Activated CD4-positive, alpha-beta T cell treated with anti-CD3 and anti-CD28 coated beads for 36 hours (primary cell): ENCODE measurements at regions of chr14 and their contacts with region 1.

Region 1: DNA sequence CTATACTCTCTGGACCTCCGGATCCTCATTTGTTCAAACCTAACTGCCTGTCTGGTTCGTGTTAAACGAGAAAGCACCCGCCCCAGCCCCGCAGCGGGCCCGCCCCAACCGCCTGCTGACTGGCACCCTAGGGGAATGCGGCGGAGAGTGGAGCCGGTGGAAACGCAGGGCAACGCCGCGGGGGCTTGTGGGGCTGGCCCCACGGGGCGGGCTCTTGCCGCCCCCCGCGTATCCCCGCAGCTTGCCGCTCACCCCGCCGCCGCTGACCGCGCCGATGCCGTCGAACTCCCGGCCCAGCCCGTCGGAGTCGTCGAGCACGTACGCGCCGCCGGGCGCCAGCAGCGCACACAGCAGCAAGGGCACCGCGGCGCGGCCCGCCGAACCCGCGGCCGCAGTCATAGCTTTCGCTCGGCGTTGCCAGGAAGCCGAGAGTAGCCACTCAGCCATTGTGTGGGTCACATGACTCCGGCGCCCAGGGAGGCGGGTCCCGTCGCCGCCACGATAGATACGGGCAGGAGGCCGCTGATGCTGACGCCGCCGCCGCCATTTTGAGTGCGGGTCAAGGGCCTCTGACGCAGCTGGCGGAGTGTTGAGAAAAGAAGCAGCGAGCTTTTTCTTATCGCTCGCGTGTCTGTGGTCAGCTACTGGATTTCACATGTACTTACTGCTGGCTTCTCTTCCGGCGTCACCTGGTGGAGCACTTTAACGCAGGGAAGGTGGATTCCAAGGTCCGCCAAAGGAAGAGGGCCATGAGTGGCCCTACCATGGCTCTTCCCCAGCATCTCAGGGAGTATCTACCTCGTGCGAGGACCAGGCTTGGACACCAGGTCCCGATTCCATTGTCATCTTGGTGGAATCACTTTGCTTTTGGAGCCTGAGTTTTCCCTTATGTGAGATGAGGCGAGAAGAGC is at the start of gene GALC:
- DNase-seq: peak; percentile 97
- ATAC-seq: peak; percentile 90
- H3K4me3 Mint-ChIP-seq: peak within 1 kb of the TSS; percentile 81
- H3K27ac Mint-ChIP-seq: peak within 1 kb of the TSS; percentile 95
- H3K4me1 Mint-ChIP-seq: peaks cover 56% of the 10 kb centered on the region
- H3K27me3 Mint-ChIP-seq: no peaks in the 10 kb centered on the region
- total RNA-seq, gene GALC: 10.3 to 10.8 TPM

Region 2: DNA sequence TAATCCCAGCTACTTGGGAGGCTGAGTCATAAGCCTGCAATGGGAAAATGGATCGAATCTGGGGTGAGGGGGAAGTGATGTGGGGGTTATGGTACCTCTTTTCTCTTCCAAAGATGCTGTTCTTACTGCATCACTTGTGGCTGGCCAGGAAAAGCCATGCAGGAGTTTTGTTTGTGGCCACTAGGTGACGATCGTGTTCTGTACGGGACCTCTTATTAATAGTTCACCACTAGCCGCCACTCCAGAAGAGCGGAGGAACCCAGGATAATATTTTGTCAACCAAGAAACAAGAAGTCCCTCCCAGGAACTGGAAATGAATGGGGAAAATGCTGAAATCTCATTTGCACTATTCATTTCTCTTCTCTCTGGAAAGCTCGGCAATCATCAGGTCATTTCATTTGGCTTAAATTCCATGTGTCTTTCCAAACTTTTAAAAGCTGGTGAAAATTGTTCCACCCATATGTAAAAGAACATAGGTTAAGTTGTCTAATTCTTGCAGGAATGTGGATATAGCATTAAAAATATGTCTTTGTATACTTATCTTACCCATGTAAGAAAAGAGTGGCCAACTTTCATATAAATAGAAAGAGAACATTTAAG is 20.9 kb after region 1 on chr14:
- CTCF ChIA-PET with region 1: interaction called, 26 read pairs
- POLR2A ChIA-PET with region 1: no interaction called
- intact Hi-C with region 1: no loop called
- DNase-seq: peak; percentile 50
- ATAC-seq: peak; percentile 58
- H3K4me3 Mint-ChIP-seq: no peak overlapping the region
- H3K27ac Mint-ChIP-seq: no peak overlapping the region
- H3K4me1 Mint-ChIP-seq: peaks cover 63% of the 10 kb centered on the region
- H3K27me3 Mint-ChIP-seq: no peaks in the 10 kb centered on the region

Region 3: GRCh38 chr14:88030079-88030478 is 37.1 kb after region 1 on chr14:
- CTCF ChIA-PET with region 1: interaction called, 4 read pairs
- POLR2A ChIA-PET with region 1: interaction called, 3 read pairs
- intact Hi-C with region 1: loop called in 1 of 2 experiments (anchors 2 kb)
- DNase-seq: no peak
- ATAC-seq: no peak
- H3K4me3 Mint-ChIP-seq: no peak overlapping the region
- H3K27ac Mint-ChIP-seq: peak overlapping the region; percentile 32
- H3K4me1 Mint-ChIP-seq: peaks cover 50% of the 10 kb centered on the region
- H3K27me3 Mint-ChIP-seq: no peaks in the 10 kb centered on the region

Region 4: DNA sequence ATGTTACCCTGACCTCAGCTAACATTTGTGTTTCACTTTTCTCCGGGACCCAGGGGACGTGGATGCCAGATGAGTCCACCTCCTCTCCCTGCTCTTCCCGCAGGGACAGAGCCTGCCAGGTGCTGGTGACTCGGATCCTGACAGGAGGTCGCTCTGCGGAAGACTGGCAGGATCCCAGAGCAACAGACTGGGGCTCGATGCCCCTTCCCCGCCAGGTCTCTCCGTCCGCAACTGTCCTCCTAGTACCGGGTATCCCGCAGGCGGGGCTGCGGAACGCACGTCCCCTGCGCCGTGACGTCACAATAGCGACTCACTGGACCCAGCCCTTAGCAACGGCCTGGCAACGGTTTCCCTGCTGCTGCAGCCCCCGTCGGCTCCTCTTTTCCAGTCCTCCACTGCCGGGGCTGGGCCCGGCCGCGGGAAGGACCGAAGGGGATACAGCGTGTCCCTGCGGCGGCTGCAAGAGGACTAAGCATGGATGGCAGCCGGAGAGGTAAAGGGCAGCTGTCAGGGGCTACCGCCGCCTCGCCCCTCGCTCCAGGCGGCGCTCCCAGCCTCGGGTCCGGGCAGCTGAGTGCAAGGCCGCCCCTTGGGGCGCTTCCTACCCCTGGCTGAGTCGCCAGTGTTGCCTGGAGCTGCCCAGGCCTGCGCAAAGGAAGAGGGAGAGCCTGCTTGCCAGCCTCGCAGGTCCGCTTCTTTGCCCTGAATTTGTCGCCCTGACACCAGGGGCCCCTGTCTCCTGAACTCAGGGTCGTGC is 392.6 kb after region 1 on chr14 and contains the start of gene SPATA7:
- CTCF ChIA-PET with region 1: no interaction called
- POLR2A ChIA-PET with region 1: no interaction called
- intact Hi-C with region 1: loop called in 1 of 2 experiments (anchors 10 kb)
- DNase-seq: peak; percentile 93
- ATAC-seq: peak; percentile 99
- H3K4me3 Mint-ChIP-seq: peak within 1 kb of the TSS; percentile 96
- H3K27ac Mint-ChIP-seq: peak within 1 kb of the TSS; percentile 88
- H3K4me1 Mint-ChIP-seq: peaks cover 17% of the 10 kb centered on the region
- H3K27me3 Mint-ChIP-seq: no peaks in the 10 kb centered on the region
- total RNA-seq, gene SPATA7: 3.4 to 4.0 TPM

Region 5: GRCh38 chr14:88792572-88793258 is 799.7 kb after region 1 on chr14 and contains the start of gene EML5:
- CTCF ChIA-PET with region 1: no interaction called
- POLR2A ChIA-PET with region 1: no interaction called
- intact Hi-C with region 1: loop called in 1 of 2 experiments (anchors 5 kb)
- DNase-seq: peak; percentile 90
- ATAC-seq: peak; percentile 76
- H3K4me3 Mint-ChIP-seq: peak within 1 kb of the TSS; percentile 87
- H3K27ac Mint-ChIP-seq: peak within 1 kb of the TSS; percentile 87
- H3K4me1 Mint-ChIP-seq: peaks cover 26% of the 10 kb centered on the region
- H3K27me3 Mint-ChIP-seq: no peaks in the 10 kb centered on the region
- total RNA-seq, gene EML5: 8.1 TPM